ENCODE measurements at regions of chr17 and their contacts with region 1.

Region 1: DNA sequence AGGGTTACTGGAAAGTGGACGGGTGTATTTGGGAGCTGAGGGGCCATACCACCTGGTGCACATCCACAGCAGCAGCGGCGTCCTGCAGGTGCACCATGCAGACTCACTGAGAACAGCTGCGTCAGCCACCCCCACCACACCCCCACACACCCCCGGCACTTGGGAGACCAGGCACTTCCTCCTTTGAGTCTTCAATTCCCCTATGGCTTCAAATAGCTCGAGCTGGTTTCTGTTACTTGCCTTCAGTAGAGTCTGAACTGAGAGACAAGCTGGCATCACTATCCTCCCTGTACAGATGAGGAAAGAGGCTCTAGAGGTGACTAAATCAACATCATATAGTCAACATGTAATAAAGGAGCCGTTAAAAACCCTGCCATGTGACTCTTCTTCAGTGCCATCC is 15.4 kb downstream of the CUEDC1 start:
- DNase-seq: peak; percentile 95
- H3K4me3 ChIP-seq: peak overlapping the region; percentile 36
- H3K27ac ChIP-seq: peak overlapping the region; percentile 22
- H3K4me1 ChIP-seq: peaks cover 31% of the 10 kb centered on the region
- CTCF ChIP-seq: no peak

Region 2: GRCh38 chr17:57868007-57868909 is 71.5 kb before region 1 on chr17:
- CTCF ChIA-PET with region 1: no interaction called
- POLR2A ChIA-PET with region 1: no interaction called
- intact Hi-C with region 1: loop called (anchors 2 kb)
- DNase-seq: peak; percentile 85
- H3K4me3 ChIP-seq: no peak overlapping the region
- H3K27ac ChIP-seq: no peak overlapping the region
- H3K4me1 ChIP-seq: peaks cover 16% of the 10 kb centered on the region
- CTCF ChIP-seq: peak; percentile 50

Region 3: GRCh38 chr17:57902800-57903759 is 36.7 kb before region 1 on chr17:
- CTCF ChIA-PET with region 1: no interaction called
- POLR2A ChIA-PET with region 1: no interaction called
- intact Hi-C with region 1: loop called (anchors 1 kb)
- DNase-seq: peak; percentile 91
- H3K4me3 ChIP-seq: peak overlapping the region; percentile 33
- H3K27ac ChIP-seq: peak overlapping the region; percentile 60
- H3K4me1 ChIP-seq: peaks cover 53% of the 10 kb centered on the region
- CTCF ChIP-seq: no peak

Measured in OCI-LY7 (cell line).